HepG2 (cell line): ENCODE measurements at regions of chr19 and their contacts with region 1.

Region 1: GRCh38 chr19:1863726-1864480 is 524 bp upstream of the KLF16 start:
- DNase-seq: peak; percentile 85
- ATAC-seq: peak; percentile 48
- H3K4me3 ChIP-seq: peak overlapping the region; percentile 73 to 98 (median 82)
- H3K27ac ChIP-seq: peak overlapping the region; percentile 98
- H3K4me1 ChIP-seq: peaks cover 64% of the 10 kb centered on the region
- H3K27me3 ChIP-seq: no peaks in the 10 kb centered on the region; a peak in 1 of 5 replicates
- CTCF ChIP-seq: peak; percentile 30; the same call in 1 of the 2 replicates
- EP300 ChIP-seq: 0 out of 4 replicates have a peak, but pooled peaks of 1 of the 2 experiments have one; percentile 35
- POLR2A ChIP-seq: peak; percentile 45 to 62; a peak in 2 of 4 replicates
- RAD21 ChIP-seq: no peak; the same call in 1 of the 2 replicates

Region 2: DNA sequence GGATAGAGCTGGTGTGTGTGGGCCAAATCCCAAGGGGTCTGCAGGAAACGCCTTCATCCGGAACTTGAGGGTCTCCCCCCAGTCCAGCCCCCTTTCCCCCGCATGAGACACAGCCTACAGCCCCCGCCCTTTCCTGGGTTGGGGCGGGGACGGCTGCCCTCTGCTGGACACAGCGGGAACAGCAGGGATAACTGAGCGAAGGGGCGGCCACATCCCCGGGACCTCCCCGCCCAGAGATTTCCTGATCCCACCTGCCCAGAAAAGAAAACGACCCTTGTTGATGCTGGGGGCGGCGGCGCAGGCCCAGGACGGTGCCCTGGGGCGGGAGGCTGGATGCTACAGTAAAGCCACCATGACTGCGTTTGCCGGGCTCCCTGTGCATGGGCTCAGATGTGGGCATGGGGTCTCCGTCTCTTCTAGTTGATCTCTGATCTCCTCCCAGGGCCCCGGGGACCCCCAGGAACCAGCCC is 96.4 kb before region 1 on chr19:
- CTCF ChIA-PET with region 1: no interaction called
- POLR2A ChIA-PET with region 1: no interaction called
- in situ Hi-C with region 1: no loop called
- intact Hi-C with region 1: no loop called
- DNase-seq: no peak
- ATAC-seq: peak; percentile 70
- H3K4me3 ChIP-seq: no peak overlapping the region
- H3K27ac ChIP-seq: no peak overlapping the region
- H3K4me1 ChIP-seq: no peaks in the 10 kb centered on the region
- H3K27me3 ChIP-seq: peaks cover 11 to 60% of the 10 kb centered on the region in 2 experiments
- CTCF ChIP-seq: peak; percentile 93
- EP300 ChIP-seq: no peak
- POLR2A ChIP-seq: no peak
- RAD21 ChIP-seq: peak; percentile 70

Region 3: DNA sequence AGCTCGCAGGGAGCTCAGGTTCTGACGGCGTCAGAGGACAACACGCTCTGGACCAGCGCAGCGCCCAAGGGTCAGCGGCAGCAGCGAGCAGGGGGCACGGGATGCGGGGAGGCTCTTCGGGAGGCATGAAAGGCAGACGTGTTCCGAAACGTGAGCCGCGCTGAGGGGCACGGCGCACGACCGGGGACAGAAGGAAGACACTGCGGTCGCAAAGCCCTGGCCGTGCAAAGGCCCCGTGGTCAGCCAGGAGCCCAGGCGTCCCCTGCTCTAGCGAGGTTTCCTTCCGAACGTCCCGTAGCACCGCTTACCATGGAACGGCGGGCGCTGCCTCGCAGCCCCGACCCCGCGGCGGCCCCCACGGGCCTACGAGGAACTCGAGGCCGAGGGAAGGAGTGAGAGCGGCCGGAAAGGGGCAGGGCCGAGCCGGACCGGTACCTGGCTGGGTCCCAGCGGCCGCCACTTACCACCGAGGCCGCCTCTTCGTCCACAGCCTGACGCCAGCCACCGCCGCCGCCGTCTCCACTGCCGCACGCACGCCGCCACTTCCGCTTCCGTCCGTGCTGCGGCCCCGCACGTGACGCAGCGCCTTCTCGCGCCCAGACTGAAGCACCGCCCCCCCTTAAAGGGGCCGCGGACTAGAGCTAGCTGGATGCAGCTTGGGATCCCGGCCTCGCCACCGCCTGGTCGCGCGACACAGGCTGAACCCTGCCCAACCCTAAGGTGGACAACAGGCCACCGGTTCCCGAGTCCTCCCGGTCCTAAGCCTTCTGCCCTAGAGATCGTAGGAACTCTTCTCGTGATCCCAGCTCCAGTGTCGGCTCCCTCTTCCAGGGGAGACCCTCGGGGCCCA is 12.0 kb after region 1 on chr19:
- CTCF ChIA-PET with region 1: no interaction called
- POLR2A ChIA-PET with region 1: interaction called, 13 read pairs
- in situ Hi-C with region 1: no loop called
- intact Hi-C with region 1: no loop called
- DNase-seq: peak; percentile 79
- ATAC-seq: peak; percentile 84
- H3K4me3 ChIP-seq: peak overlapping the region; percentile 68 to 99 (median 94)
- H3K27ac ChIP-seq: peak overlapping the region; percentile 79
- H3K4me1 ChIP-seq: peaks cover 45% of the 10 kb centered on the region
- H3K27me3 ChIP-seq: no peaks in the 10 kb centered on the region
- CTCF ChIP-seq: peak; percentile 39
- EP300 ChIP-seq: no peak
- POLR2A ChIP-seq: peak; percentile 77 to 94
- RAD21 ChIP-seq: peak; percentile 45

Region 4: GRCh38 chr19:1882089-1882785 is 18.3 kb after region 1 on chr19:
- CTCF ChIA-PET with region 1: no interaction called
- POLR2A ChIA-PET with region 1: interaction called, 5 read pairs
- in situ Hi-C with region 1: no loop called
- intact Hi-C with region 1: loop called (anchors 1 kb)
- DNase-seq: no peak
- ATAC-seq: no peak
- H3K4me3 ChIP-seq: no peak overlapping the region
- H3K27ac ChIP-seq: no peak overlapping the region
- H3K4me1 ChIP-seq: peaks cover 34% of the 10 kb centered on the region
- H3K27me3 ChIP-seq: no peaks in the 10 kb centered on the region
- CTCF ChIP-seq: no peak
- EP300 ChIP-seq: no peak
- POLR2A ChIP-seq: no peak
- RAD21 ChIP-seq: no peak

Region 5: DNA sequence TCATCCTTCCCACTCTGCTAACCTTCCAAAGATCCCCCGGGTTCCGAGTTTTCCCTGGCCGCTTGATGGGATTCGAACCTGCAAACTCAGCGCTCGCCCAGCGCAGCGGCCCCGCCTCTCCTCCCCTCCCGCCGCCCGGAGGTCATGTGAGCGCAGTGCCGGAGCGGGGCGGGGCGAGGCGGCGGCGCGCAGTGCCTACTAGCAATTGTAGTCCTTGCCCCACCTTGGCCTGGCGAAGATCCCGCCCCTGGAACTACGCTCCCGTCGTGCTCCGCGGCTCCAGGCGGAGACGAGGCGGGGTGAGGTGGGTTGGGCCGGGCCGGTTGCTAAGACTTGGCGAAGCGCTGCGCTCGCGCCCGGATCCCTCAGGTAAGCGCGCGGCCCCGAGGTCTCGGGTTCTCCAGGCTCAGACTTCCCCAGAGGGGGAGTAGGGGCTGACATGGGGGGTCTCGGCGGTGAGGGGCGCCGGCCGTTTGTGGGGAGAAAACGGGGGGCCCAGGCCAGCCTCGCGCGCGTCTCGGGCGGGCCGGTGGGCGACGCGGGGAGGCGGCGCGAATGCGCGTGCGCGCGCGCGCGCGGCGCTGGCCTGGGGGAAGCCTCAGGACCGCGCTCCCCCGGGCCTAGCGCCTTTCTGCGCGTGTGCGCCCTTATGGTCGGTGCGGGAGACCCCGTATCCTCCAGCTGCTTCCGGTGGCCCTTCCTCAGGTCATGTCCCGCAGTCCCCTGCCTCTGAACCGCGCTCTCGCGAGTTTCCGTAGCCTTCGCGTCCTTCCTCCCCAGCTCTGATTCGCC is 41.4 kb after region 1 on chr19 and contains the starts of genes ADAT3 and SCAMP4:
- CTCF ChIA-PET with region 1: no interaction called
- POLR2A ChIA-PET with region 1: interaction called, 11 read pairs
- in situ Hi-C with region 1: no loop called
- intact Hi-C with region 1: no loop called
- DNase-seq: peak; percentile 94
- ATAC-seq: peak; percentile 80
- H3K4me3 ChIP-seq: peak within 1 kb of the TSS; percentile 62 to 75 (median 74); a peak in 5 of 6 replicates
- H3K27ac ChIP-seq: peak within 1 kb of the TSS; percentile 69
- H3K4me1 ChIP-seq: peaks cover 78% of the 10 kb centered on the region
- H3K27me3 ChIP-seq: no peaks in the 10 kb centered on the region
- CTCF ChIP-seq: no peak
- EP300 ChIP-seq: peak in 1 of 2 experiments; percentile 53; a peak in 2 of 4 replicates
- POLR2A ChIP-seq: peak; percentile 65 to 84
- RAD21 ChIP-seq: peak; percentile 37; the same call in 1 of the 2 replicates
- total RNA-seq, gene ADAT3: 2.0 and 3.5 TPM in 2 replicates
- total RNA-seq, gene SCAMP4: 10.8 and 13.7 TPM in 2 replicates